ENCODE measurements at regions of chr4 and their contacts with region 1.

Region 1: DNA sequence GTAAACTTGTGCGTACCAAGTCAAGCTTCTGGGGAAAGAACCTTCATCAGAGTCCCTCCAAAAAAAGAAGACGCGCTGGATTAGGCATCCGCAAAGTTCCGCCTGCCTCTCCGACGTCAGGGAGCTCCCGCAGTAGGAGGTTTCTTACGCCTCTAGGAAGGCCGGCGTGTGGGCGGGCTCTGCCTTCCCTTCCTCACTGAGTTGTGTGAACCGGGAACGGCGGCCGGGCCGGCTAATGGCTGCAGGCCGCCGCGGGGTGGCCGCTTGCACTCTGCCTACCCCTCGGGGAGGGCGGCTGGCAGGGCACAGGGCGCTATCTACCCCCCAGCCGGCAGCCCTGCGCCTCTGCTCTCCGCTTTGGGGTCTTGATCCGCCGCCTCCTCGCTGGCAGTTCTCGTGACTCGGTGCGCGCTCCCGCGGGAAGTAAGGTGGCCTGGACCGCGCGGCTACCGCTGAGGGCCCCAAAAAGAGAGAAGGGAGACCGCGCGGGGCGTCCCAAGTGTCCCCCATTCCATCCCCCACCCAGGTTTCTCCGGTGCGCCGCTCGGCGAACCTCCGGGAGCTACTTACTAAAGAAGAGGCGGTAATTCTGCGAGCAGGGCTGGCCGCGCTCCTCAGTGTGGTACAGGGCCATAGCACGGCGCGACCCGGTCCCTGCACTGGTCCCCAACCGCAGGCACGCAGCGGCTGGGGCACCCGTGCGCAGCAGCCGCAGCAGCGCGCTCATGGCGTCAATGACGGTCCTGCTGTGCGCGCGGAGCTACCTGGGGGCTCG is at the start of gene PPA2:
- DNase-seq: peak; percentile 56 to 87 (median 80)
- ATAC-seq: peak; percentile 78 to 83
- H3K4me3 Mint-ChIP-seq: peak within 1 kb of the TSS; percentile 90 to 99 (median 98)
- H3K27ac Mint-ChIP-seq: peak within 1 kb of the TSS; percentile 86 to 100 (median 99)
- H3K4me1 Mint-ChIP-seq: peaks cover 13 to 49% (median 41%) of the 10 kb centered on the region in 4 donors
- H3K27me3 Mint-ChIP-seq: peaks cover 0 to 3% (median 0%) of the 10 kb centered on the region in 5 donors
- polyA plus RNA-seq, gene PPA2: 117 to 155 (median 130) TPM

Region 2: DNA sequence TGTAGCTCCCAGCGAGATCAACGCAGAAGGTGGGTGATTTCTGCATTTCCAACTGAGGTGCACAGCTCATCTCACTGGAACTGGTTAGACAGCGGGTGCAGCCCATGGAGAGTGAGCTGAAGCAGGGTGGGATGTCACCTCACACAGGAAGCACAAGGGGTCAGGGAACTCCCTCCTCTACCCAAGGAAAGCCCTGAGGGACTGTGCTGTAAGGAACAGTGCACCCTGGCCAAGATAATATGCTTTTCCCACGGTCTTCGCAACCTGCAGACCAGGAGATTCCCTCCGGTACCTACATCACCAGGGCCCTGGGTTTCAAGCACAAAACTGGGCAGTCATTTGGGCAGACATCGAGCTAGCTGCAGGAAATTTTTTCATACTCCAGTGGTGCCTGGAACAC is 543.2 kb before region 1 on chr4:
- POLR2A ChIA-PET with region 1: interaction called, 15 read pairs
- DNase-seq: no peak
- ATAC-seq: peak; percentile 32 to 40
- H3K4me3 Mint-ChIP-seq: peak overlapping the region in 7 of 10 donors; percentile 19 to 80 (median 70)
- H3K27ac Mint-ChIP-seq: peak overlapping the region; percentile 60 to 95 (median 90)
- H3K4me1 Mint-ChIP-seq: peaks cover 28 to 54% (median 52%) of the 10 kb centered on the region in 4 donors
- H3K27me3 Mint-ChIP-seq: no peaks in the 10 kb centered on the region

Region 3: DNA sequence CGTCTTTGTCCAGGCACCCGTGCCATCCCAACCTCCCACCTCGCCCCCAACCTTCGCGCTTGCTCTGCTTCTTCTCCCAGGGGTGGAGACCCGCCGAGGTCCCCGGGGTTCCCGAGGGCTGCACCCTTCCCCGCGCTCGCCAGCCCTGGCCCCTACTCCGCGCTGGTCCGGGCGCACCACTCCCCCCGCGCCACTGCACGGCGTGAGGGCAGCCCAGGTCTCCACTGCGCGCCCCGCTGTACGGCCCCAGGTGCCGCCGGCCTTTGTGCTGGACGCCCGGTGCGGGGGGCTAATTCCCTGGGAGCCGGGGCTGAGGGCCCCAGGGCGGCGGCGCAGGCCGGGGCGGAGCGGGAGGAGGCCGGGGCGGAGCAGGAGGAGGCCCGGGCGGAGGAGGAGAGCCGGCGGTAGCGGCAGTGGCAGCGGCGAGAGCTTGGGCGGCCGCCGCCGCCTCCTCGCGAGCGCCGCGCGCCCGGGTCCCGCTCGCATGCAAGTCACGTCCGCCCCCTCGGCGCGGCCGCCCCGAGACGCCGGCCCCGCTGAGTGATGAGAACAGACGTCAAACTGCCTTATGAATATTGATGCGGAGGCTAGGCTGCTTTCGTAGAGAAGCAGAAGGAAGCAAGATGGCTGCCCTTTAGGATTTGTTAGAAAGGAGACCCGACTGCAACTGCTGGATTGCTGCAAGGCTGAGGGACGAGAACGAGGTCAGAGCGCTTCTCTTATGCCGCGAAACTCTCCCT is 327.1 kb before region 1 on chr4 and contains the start of gene TET2:
- POLR2A ChIA-PET with region 1: interaction called, 19 read pairs
- DNase-seq: peak; percentile 69 to 91 (median 80)
- ATAC-seq: peak; percentile 83 to 88
- H3K4me3 Mint-ChIP-seq: peak within 1 kb of the TSS; percentile 97 to 100 (median 99)
- H3K27ac Mint-ChIP-seq: peak within 1 kb of the TSS; percentile 96 to 100 (median 99)
- H3K4me1 Mint-ChIP-seq: peaks cover 18 to 53% (median 39%) of the 10 kb centered on the region in 4 donors
- H3K27me3 Mint-ChIP-seq: no peaks in the 10 kb centered on the region
- polyA plus RNA-seq, gene TET2: 13.1 to 22.8 (median 14.2) TPM

Region 4: DNA sequence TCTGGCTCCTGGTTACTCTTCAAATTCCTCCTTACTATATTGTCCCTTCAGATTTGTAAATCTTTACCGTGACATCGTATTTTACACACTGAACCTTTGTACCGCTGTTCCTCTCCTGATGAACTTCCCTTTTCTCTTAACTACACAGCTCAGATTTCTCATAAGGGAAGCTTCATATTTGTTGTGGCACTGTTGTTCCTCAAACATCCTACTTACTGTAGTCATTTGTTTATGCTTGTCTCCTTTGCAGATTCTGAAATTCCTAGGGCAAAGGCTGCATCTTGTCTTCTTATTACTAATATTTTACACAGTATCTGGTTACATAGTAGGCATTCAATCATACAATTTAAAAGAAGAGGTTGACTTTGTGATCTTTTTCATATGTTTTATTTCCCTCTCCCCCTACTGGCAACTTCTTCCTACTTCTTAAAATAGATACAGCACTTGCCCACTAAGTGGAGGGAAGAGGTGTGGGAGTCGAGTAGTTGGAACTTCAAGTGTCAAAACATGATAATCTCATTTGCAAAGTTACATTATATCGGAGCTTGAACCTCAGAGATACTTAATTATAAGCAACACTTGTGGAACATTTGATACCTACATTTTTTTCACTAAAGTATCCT is 276.9 kb before region 1 on chr4:
- POLR2A ChIA-PET with region 1: no interaction called
- DNase-seq: peak in 1 of 10 donors; percentile 2
- ATAC-seq: peak in 1 of 2 donors; percentile 22
- H3K4me3 Mint-ChIP-seq: no peak overlapping the region
- H3K27ac Mint-ChIP-seq: peak overlapping the region in 2 of 10 donors; percentile 2 to 10
- H3K4me1 Mint-ChIP-seq: peaks cover 13 to 61% (median 32%) of the 10 kb centered on the region in 4 donors
- H3K27me3 Mint-ChIP-seq: no peaks in the 10 kb centered on the region

Region 5: DNA sequence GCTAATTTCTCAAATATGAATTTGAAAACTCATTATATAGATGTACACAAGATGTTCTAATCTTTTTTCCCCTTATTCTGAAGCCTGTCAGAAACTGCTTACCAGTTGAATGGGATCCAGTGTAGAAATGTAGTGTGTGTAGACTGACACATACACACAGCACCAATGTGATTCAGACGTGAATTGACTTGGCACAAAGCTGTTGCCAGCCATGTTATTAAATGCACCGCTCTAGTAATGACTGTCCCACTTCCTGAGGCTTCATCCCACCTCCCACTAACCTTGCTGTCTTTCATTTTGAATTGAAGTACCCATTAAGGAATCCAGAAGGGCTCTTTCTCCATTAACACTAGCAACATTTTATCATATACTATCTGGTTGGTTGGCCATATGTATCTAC is 146.3 kb before region 1 on chr4:
- POLR2A ChIA-PET with region 1: no interaction called
- DNase-seq: no peak
- ATAC-seq: no peak
- H3K4me3 Mint-ChIP-seq: no peak overlapping the region
- H3K27ac Mint-ChIP-seq: no peak overlapping the region
- H3K4me1 Mint-ChIP-seq: peaks cover 8 to 14% (median 12%) of the 10 kb centered on the region in 4 donors
- H3K27me3 Mint-ChIP-seq: no peaks in the 10 kb centered on the region

Region 6: DNA sequence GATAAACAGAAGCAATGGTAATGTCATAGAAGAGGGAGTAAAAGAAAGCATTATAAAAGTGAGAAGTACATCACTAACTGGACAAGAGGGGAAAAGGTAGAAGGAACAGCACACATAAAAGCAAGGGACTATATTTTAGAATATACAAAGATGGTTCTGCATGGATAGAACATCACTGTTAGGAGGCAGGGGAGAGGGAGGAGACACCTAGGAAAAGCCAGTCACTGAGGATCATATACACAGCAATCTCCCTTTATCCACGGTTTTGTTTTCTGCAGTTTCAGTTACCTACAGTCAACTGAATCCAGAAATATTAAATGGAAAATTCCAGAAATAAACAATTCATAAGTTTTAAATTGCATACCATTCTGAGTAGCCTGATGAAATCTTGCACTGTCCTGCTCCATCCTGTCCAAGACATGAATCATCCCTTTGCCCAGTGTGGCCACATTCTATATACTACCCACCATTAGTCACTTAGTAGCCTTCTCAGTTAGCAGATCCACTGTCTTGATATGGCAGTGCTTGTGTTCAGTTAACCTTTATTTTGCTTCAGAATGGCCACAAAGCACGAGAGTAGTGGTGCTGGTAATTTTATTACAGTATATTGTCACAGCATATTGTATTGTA is 73.9 kb before region 1 on chr4:
- POLR2A ChIA-PET with region 1: no interaction called
- DNase-seq: no peak
- ATAC-seq: no peak
- H3K4me3 Mint-ChIP-seq: no peak overlapping the region
- H3K27ac Mint-ChIP-seq: no peak overlapping the region
- H3K4me1 Mint-ChIP-seq: peaks cover 0 to 2% (median 0%) of the 10 kb centered on the region in 4 donors
- H3K27me3 Mint-ChIP-seq: no peaks in the 10 kb centered on the region

Region 7: DNA sequence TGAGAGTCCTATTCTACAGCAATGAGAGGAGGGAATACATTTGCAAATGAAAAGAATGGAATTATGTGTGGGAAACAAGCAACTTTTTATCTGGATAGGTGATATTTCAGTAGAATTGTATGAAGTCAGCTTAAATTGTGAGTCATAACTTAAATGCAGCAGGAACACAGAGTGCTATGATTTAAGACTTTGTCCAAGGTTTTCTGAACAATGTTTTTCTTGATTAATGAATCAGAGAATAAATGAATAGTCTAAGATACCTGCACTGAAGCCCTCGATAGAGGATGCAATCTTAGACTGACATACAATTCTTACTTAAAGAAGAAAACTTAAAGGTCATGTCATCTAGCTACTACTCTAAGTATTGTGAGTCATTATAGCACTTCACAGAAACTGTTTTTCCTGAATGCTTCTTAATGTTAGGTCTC is 86.9 kb after region 1 on chr4:
- POLR2A ChIA-PET with region 1: no interaction called
- DNase-seq: no peak
- ATAC-seq: no peak
- H3K4me3 Mint-ChIP-seq: no peak overlapping the region
- H3K27ac Mint-ChIP-seq: no peak overlapping the region
- H3K4me1 Mint-ChIP-seq: peaks cover 0 to 2% (median 0%) of the 10 kb centered on the region in 4 donors
- H3K27me3 Mint-ChIP-seq: peaks cover 0 to 11% (median 2%) of the 10 kb centered on the region in 5 donors

Region 8: DNA sequence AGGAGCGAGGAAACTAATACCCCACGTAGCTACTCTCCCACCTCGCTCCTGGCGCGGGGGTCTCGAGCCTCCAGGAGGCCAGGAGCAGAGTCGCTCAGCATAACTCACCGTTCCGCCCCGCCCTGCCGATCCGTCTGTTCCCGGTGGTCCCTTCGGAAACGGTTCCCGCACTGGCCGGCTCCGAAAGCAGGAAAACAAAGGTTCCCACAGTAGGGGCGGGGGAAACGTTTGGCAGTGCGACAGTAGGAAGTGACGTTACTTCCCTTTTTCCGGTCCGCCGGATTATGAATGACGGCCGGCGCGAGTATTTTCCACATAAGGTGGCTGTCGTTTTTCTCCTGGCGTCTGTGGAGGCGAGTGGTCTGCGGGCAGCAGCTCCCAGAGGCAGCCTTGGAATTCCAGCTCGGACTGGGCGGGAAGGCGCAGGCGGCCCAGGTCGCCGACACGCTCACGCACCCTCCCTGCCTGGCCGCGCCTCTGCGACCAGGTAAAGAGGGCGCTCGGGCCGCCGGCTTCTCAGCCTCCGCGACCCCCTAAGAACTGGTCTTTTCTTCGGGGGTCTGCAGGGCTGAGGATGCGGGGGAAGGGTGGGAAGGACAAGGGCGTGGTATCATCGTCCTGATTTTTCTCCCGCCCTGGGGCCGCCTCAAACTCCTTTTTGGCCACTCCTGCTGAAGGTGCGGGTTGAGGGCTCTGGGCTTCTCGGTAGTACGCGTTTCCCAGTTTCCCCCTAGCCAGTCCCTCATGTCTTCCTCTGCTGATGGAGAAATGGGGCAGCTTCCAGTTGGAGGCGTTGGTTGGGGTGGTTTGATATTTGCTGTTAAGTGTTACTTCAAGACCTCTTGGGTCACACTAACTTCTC is 235.2 kb after region 1 on chr4 and contains the starts of genes GSTCD and INTS12:
- POLR2A ChIA-PET with region 1: interaction called, 13 read pairs
- DNase-seq: peak; percentile 69 to 91 (median 86)
- ATAC-seq: peak; percentile 85 to 91
- H3K4me3 Mint-ChIP-seq: peak within 1 kb of the TSS; percentile 95 to 100 (median 100)
- H3K27ac Mint-ChIP-seq: peak within 1 kb of the TSS; percentile 96 to 99 (median 99)
- H3K4me1 Mint-ChIP-seq: peaks cover 26 to 41% (median 36%) of the 10 kb centered on the region in 4 donors
- H3K27me3 Mint-ChIP-seq: no peaks in the 10 kb centered on the region
- polyA plus RNA-seq, gene GSTCD: 2.1 to 4.3 (median 2.6) TPM
- polyA plus RNA-seq, gene INTS12: 19.4 to 35.8 (median 30.4) TPM

Measured in naive thymus-derived CD8-positive, alpha-beta T cell (primary cell).